A549 (cell line): ENCODE measurements at regions of chr3 and their contacts with region 1.

Region 1: DNA sequence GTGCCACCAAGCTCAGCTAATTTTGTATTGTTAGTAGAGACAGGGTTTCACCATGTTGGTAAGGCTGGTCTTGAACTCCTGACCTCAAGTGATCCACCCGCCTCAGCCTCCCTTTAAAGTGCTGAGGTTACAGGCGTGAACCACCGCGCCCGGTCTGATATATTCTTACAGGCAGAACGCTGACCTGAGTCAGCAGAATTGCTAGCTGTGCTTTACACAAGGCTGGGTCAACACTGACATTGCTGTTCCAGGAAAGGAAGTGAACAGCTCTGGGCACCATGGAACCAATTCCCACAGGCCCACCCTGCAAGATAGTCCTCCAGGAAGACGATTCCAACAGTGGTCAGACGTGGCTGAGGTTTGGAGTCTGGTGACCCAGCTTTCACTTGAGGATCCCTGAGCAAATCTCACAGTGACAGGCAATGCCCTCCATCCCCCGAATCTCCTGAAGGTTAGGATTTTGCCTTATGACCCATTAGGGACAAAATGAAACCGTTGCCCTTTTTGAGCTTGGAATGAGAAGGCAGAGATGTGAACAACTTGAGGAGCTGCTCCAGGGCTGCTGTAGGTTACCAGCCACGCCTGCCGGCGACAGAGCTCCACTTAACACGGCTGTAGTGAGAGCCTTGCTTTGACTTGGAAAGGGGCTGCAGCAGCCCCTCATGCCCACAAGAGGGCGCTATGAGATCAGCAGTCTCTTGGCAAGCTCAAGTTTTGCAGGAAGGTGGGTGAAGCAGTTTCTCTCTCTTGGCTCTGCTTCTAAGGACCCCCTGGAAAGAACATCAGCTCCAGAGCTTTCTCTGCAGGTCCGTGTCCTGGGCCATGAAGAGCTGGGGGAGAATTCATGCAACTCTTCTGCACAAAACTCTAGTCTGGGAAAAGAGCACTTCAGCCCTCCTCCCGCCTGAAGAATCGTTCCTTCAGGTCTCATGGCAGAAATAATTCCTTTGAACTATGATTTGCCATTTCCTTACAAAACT is 74.1 kb downstream of the SENP2 start:
- DNase-seq: peak; percentile 70 to 80
- ATAC-seq: peak; percentile 75 to 91
- H3K4me3 ChIP-seq: no peak overlapping the region
- H3K27ac ChIP-seq: peak overlapping the region; percentile 60 to 70; a peak in 4 of 6 replicates
- H3K4me1 ChIP-seq: peaks cover 35% of the 10 kb centered on the region
- CTCF ChIP-seq: peak; percentile 93
- EP300 ChIP-seq: no peak
- POLR2A ChIP-seq: no peak
- RAD21 ChIP-seq: peak; percentile 86 to 88

Region 2: GRCh38 chr3:185268194-185268962 is 391.9 kb before region 1 on chr3:
- CTCF ChIA-PET with region 1: no interaction called
- POLR2A ChIA-PET with region 1: no interaction called
- DNase-seq: no peak
- ATAC-seq: no peak
- H3K4me3 ChIP-seq: no peak overlapping the region
- H3K27ac ChIP-seq: no peak overlapping the region
- H3K4me1 ChIP-seq: no peaks in the 10 kb centered on the region
- CTCF ChIP-seq: no peak
- EP300 ChIP-seq: no peak
- POLR2A ChIP-seq: no peak
- RAD21 ChIP-seq: no peak

Region 3: DNA sequence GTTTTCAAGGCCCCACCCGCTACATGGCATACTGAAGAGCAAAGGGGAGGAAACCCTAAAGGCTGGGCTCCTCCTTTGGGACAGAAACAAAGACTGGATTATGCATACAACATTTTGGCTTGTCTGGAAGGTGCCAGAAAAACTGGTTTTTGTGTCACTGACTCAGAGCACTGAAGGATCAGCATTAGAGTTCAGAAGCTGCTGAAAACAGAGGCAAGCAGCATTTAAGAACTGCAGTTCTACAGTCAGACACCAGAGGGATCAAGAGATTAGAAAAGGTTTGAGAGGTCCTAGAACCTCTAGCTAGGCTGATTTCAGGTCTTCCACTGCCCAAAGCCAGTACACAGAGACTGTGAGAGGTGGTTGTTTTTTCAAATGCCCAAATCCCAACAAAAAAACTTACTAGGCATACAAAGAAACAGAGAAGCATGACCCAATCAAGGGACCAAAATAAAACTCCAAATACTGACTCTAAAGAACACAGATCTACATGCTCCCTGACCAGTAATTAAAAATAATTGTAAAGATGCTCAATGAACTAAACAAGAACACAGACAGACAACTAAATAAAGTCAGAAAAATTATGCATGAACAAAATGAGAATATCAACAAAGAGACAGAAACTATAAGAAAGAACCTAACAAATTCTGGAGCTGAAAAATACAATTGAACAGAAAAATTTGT is 17.1 kb after region 1 on chr3:
- CTCF ChIA-PET with region 1: interaction called, 60 read pairs
- POLR2A ChIA-PET with region 1: no interaction called
- DNase-seq: peak; percentile 61 to 62
- ATAC-seq: peak; percentile 76 to 86; a peak in 5 of 6 replicates
- H3K4me3 ChIP-seq: no peak overlapping the region
- H3K27ac ChIP-seq: no peak overlapping the region
- H3K4me1 ChIP-seq: no peaks in the 10 kb centered on the region; the same call in 2 of the 3 replicates
- CTCF ChIP-seq: peak; percentile 47
- EP300 ChIP-seq: no peak
- POLR2A ChIP-seq: no peak
- RAD21 ChIP-seq: peak; percentile 62 to 64

Region 4: DNA sequence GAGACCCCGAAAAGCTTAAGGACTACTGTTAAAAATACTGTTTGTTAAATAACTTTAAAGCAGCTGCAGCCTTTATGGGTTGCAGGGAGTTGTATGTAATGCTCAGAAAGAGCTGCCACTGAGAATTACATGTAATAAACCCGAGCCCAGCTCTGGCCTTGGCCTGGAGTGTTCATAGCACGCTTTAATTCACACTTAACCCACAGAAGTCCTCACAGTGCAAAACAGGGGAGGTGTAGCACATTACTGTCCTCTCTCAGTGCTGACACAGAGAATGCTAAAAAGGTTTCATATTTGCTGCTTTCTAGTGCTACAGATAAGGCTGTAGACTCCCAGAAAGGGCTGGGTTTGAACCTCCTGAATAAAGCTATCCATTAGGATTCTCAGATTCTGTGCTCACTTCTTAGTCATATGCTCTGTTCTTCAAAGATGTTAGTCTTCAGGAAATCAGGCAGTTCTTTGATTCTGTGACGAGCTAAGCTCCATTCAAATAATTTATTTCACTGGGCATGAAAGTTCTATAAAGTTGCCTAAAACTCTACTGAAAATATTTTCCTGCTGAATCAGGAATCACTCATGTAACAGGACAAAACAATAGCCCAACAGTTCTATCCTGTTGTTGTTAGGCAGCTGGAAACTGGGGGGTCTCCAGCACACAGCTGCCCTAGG is 33.9 kb after region 1 on chr3:
- CTCF ChIA-PET with region 1: interaction called, 26 read pairs
- POLR2A ChIA-PET with region 1: no interaction called
- DNase-seq: no peak
- ATAC-seq: no peak
- H3K4me3 ChIP-seq: no peak overlapping the region
- H3K27ac ChIP-seq: no peak overlapping the region
- H3K4me1 ChIP-seq: peaks cover 3% of the 10 kb centered on the region
- CTCF ChIP-seq: no peak
- EP300 ChIP-seq: no peak
- POLR2A ChIP-seq: no peak
- RAD21 ChIP-seq: no peak

Region 5: GRCh38 chr3:185764163-185764979 is 104.1 kb after region 1 on chr3:
- CTCF ChIA-PET with region 1: interaction called, 44 read pairs
- POLR2A ChIA-PET with region 1: no interaction called
- DNase-seq: no peak
- ATAC-seq: no peak
- H3K4me3 ChIP-seq: no peak overlapping the region
- H3K27ac ChIP-seq: no peak overlapping the region
- H3K4me1 ChIP-seq: no peaks in the 10 kb centered on the region
- CTCF ChIP-seq: no peak
- EP300 ChIP-seq: no peak
- POLR2A ChIP-seq: no peak
- RAD21 ChIP-seq: no peak

Region 6: GRCh38 chr3:185912929-185913901 is 253.0 kb after region 1 on chr3:
- CTCF ChIA-PET with region 1: interaction called, 15 read pairs
- POLR2A ChIA-PET with region 1: interaction called, 3 read pairs
- DNase-seq: no peak
- ATAC-seq: peak in 1 of 2 experiments; percentile 16; a peak in 1 of 6 replicates
- H3K4me3 ChIP-seq: no peak overlapping the region
- H3K27ac ChIP-seq: no peak overlapping the region
- H3K4me1 ChIP-seq: peaks cover 12% of the 10 kb centered on the region; the same call in 1 of the 3 replicates
- CTCF ChIP-seq: no peak
- EP300 ChIP-seq: no peak
- POLR2A ChIP-seq: no peak
- RAD21 ChIP-seq: no peak